ENCODE measurements at regions of chr7 and their contacts with region 1.

Region 1: GRCh38 chr7:106704000-106704840 is 43.3 kb upstream of the CCDC71L start:
- DNase-seq: no peak
- H3K4me3 Mint-ChIP-seq: no peak overlapping the region
- H3K27ac Mint-ChIP-seq: no peak overlapping the region
- H3K4me1 Mint-ChIP-seq: peaks cover 7% of the 10 kb centered on the region
- H3K27me3 Mint-ChIP-seq: no peaks in the 10 kb centered on the region

Region 2: GRCh38 chr7:106425017-106425719 is 279.1 kb before region 1 on chr7:
- intact Hi-C with region 1: no loop called
- DNase-seq: peak; percentile 67
- H3K4me3 Mint-ChIP-seq: peak overlapping the region; percentile 67
- H3K27ac Mint-ChIP-seq: peak overlapping the region; percentile 97
- H3K4me1 Mint-ChIP-seq: peaks cover 91% of the 10 kb centered on the region
- H3K27me3 Mint-ChIP-seq: no peaks in the 10 kb centered on the region

Region 3: DNA sequence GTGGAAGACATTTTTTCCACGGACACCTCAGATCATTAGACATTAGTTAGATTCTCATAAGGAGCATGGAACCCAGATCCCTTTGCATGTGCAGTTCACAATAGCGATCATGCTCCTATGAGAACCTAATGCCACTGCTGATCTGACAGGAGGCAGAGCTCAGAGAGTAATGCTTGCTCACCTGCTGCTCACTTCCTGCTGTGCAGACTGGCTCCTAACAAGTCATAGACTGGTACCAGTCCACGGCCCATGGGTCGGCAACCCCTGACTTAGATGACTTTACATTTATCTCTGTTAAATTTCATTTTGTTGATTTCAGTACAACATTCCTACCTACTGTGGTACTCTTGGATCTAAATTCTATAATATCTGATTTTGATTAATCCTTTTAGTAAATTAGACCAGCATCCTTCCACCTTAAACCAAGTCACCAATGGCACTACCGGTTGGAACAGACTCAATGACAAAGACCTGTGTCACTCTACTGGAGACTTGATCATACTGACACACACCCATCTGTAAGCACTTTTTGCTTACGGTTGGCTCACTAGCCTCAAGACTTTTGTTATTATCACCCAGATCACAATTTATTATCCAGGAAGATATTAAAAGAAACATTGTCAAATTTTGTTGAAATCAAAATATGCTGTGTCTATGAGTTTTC is 35.2 kb before region 1 on chr7:
- intact Hi-C with region 1: loop called (anchors 5 kb)
- DNase-seq: no peak
- H3K4me3 Mint-ChIP-seq: no peak overlapping the region
- H3K27ac Mint-ChIP-seq: no peak overlapping the region
- H3K4me1 Mint-ChIP-seq: peaks cover 6% of the 10 kb centered on the region
- H3K27me3 Mint-ChIP-seq: peaks cover 3% of the 10 kb centered on the region

Region 4: GRCh38 chr7:106693677-106694353 is 10.4 kb before region 1 on chr7:
- intact Hi-C with region 1: no loop called
- DNase-seq: no peak
- H3K4me3 Mint-ChIP-seq: no peak overlapping the region
- H3K27ac Mint-ChIP-seq: no peak overlapping the region
- H3K4me1 Mint-ChIP-seq: peaks cover 16% of the 10 kb centered on the region
- H3K27me3 Mint-ChIP-seq: peaks cover under 1% of the 10 kb centered on the region

Region 5: GRCh38 chr7:106895246-106895864 is 191.1 kb after region 1 on chr7:
- intact Hi-C with region 1: no loop called
- DNase-seq: no peak
- H3K4me3 Mint-ChIP-seq: no peak overlapping the region
- H3K27ac Mint-ChIP-seq: peak overlapping the region; percentile 49
- H3K4me1 Mint-ChIP-seq: peaks cover 46% of the 10 kb centered on the region
- H3K27me3 Mint-ChIP-seq: no peaks in the 10 kb centered on the region

Region 6: DNA sequence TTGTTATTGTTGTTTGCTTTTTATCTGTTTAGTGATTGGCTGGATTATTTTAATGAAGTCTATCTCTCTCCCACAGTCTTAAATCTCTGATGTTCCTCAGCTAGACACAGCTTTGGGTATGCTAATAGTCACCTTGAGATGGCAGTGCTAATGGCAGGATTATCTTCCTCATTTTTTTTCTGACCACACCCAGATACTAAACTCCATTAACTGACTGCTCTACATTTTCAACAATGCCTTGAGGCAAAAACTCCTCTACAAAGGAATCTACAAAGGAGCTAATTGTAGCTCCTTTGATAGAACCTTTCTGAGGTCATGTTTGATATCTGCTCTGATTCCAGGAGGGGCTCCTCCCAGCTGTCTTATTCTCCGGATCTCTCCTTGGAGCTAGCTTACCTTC is 587.2 kb after region 1 on chr7:
- intact Hi-C with region 1: no loop called
- DNase-seq: no peak
- H3K4me3 Mint-ChIP-seq: no peak overlapping the region
- H3K27ac Mint-ChIP-seq: no peak overlapping the region
- H3K4me1 Mint-ChIP-seq: no peaks in the 10 kb centered on the region
- H3K27me3 Mint-ChIP-seq: no peaks in the 10 kb centered on the region

Measured in activated T-helper 1 cell treated with anti-CD3 and anti-CD28 coated beads, Interleukin-12 subunit alpha, Interleukin-12 subunit beta, Interleukin-2, Interleukin-4 antibody, amounts not matched to agents 30 ng/mL and 10 ng/mL and 1 ng/mL, durations not matched to agents 14 hours and 24 hours and 36 hours (primary cell).